ENCODE measurements at regions of chr14 and their contacts with region 1.

Region 1: GRCh38 chr14:64823305-64823861 is 56.3 kb downstream of the SPTB start:
- DNase-seq: peak; percentile 41 to 86
- H3K4me3 ChIP-seq: no peak overlapping the region
- H3K27ac ChIP-seq: no peak overlapping the region
- H3K4me1 ChIP-seq: peaks cover 0 to 13% (median 5%) of the 10 kb centered on the region in 4 experiments; a peak in 4 of 7 replicates
- H3K27me3 ChIP-seq: no peaks in the 10 kb centered on the region; a peak in 1 of 7 replicates
- CTCF ChIP-seq: peak; percentile 78 to 98 (median 82)
- EP300 ChIP-seq: no peak
- POLR2A ChIP-seq: no peak
- RAD21 ChIP-seq: peak; percentile 83 to 85

Region 2: DNA sequence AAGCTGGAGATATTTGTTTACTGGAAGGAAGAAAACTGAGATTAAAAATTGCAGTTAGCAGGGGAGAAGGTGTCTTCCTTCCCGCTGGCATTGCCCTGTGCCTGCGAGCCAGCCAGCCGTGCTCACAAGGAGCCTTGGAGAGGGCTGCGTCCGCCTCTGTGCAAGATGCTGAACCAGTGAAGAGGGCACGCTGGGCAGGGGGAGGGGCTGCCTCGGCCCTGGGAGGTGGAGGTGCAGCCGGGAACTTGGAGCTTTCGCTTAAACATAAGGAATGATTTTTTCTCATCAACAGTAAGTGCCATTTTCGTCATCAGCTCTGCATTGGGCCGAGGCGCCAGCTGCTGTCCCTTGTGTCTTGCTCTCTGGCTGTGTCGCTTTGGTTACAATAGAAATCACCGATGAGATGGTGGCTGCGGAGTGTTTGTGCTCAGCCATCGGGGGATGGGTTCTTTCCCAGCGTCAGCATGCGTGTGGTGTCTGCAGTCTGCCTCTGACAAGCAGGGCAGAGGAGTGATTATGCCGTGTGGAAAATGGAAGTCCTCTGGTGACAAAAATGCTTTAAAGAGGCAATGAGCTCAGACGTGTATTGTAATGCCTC is 626.5 kb before region 1 on chr14:
- CTCF ChIA-PET with region 1: no interaction called
- POLR2A ChIA-PET with region 1: no interaction called
- DNase-seq: peak in 1 of 2 experiments; percentile 78
- H3K4me3 ChIP-seq: peak overlapping the region; percentile 26 to 59 (median 53); a peak in 7 of 8 replicates
- H3K27ac ChIP-seq: no peak overlapping the region; the same call in 1 of the 2 replicates
- H3K4me1 ChIP-seq: peaks cover 15 to 27% (median 20%) of the 10 kb centered on the region in 4 experiments
- H3K27me3 ChIP-seq: no peaks in the 10 kb centered on the region
- CTCF ChIP-seq: no peak
- EP300 ChIP-seq: no peak
- POLR2A ChIP-seq: no peak
- RAD21 ChIP-seq: no peak

Region 3: GRCh38 chr14:64463195-64463594 is 360.2 kb before region 1 on chr14:
- CTCF ChIA-PET with region 1: no interaction called
- POLR2A ChIA-PET with region 1: no interaction called
- DNase-seq: no peak
- H3K4me3 ChIP-seq: no peak overlapping the region
- H3K27ac ChIP-seq: no peak overlapping the region
- H3K4me1 ChIP-seq: peaks cover 0 to 6% (median 4%) of the 10 kb centered on the region in 4 experiments; a peak in 4 of 7 replicates
- H3K27me3 ChIP-seq: no peaks in the 10 kb centered on the region
- CTCF ChIP-seq: no peak
- EP300 ChIP-seq: no peak
- POLR2A ChIP-seq: no peak
- RAD21 ChIP-seq: no peak

Region 4: GRCh38 chr14:64591809-64592208 is 231.6 kb before region 1 on chr14:
- CTCF ChIA-PET with region 1: no interaction called
- POLR2A ChIA-PET with region 1: no interaction called
- DNase-seq: no peak
- H3K4me3 ChIP-seq: no peak overlapping the region
- H3K27ac ChIP-seq: no peak overlapping the region
- H3K4me1 ChIP-seq: no peaks in the 10 kb centered on the region; a peak in 1 of 7 replicates
- H3K27me3 ChIP-seq: no peaks in the 10 kb centered on the region
- CTCF ChIP-seq: no peak
- EP300 ChIP-seq: no peak
- POLR2A ChIP-seq: no peak
- RAD21 ChIP-seq: no peak

Region 5: DNA sequence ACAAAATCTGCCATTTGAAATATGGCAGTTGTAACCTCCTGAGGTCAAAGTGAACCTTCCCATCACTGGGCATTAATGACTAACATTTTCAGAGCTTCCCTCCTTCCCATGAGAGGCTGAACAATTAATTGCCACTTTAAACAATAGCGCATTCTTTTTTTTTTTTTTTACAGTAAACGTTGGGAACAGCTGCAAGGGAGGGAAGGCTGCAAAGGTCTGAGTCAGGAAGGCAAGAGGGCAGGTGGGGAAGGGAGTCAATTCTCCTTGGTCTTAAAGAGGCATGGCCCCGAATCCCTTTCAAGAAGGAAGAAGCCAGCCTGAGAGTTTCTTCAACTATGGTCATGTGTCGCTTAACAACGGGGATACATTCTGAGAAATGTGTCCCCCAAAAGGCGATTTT is 160.2 kb before region 1 on chr14:
- CTCF ChIA-PET with region 1: no interaction called
- POLR2A ChIA-PET with region 1: no interaction called
- DNase-seq: no peak
- H3K4me3 ChIP-seq: no peak overlapping the region
- H3K27ac ChIP-seq: no peak overlapping the region
- H3K4me1 ChIP-seq: no peaks in the 10 kb centered on the region
- H3K27me3 ChIP-seq: no peaks in the 10 kb centered on the region
- CTCF ChIP-seq: no peak
- EP300 ChIP-seq: no peak
- POLR2A ChIP-seq: no peak
- RAD21 ChIP-seq: no peak

Region 6: GRCh38 chr14:64772393-64772950 is 50.9 kb before region 1 on chr14:
- CTCF ChIA-PET with region 1: interaction called, 13 read pairs
- POLR2A ChIA-PET with region 1: interaction called, 3 read pairs
- DNase-seq: no peak
- H3K4me3 ChIP-seq: no peak overlapping the region
- H3K27ac ChIP-seq: no peak overlapping the region
- H3K4me1 ChIP-seq: no peaks in the 10 kb centered on the region; a peak in 1 of 7 replicates
- H3K27me3 ChIP-seq: no peaks in the 10 kb centered on the region
- CTCF ChIP-seq: peak in 2 of 3 experiments; percentile 45 to 66; a peak in 3 of 4 replicates
- EP300 ChIP-seq: no peak
- POLR2A ChIP-seq: no peak
- RAD21 ChIP-seq: peak; percentile 26 to 54; a peak in 3 of 4 replicates

Region 7: GRCh38 chr14:64812217-64812811 is 11.1 kb before region 1 on chr14:
- CTCF ChIA-PET with region 1: interaction called, 54 read pairs
- POLR2A ChIA-PET with region 1: interaction called, 3 read pairs
- DNase-seq: peak in 1 of 2 experiments; percentile 71
- H3K4me3 ChIP-seq: peak overlapping the region in 1 of 4 experiments; percentile 19; a peak in 1 of 8 replicates
- H3K27ac ChIP-seq: no peak overlapping the region
- H3K4me1 ChIP-seq: no peaks in the 10 kb centered on the region; a peak in 1 of 7 replicates
- H3K27me3 ChIP-seq: no peaks in the 10 kb centered on the region; a peak in 1 of 7 replicates
- CTCF ChIP-seq: no peak
- EP300 ChIP-seq: no peak
- POLR2A ChIP-seq: no peak
- RAD21 ChIP-seq: no peak

Region 8: GRCh38 chr14:64855721-64856528 is 32.5 kb after region 1 on chr14:
- CTCF ChIA-PET with region 1: interaction called, 13 read pairs
- POLR2A ChIA-PET with region 1: no interaction called
- DNase-seq: no peak
- H3K4me3 ChIP-seq: no peak overlapping the region
- H3K27ac ChIP-seq: no peak overlapping the region
- H3K4me1 ChIP-seq: peaks cover 12 to 19% (median 14%) of the 10 kb centered on the region in 4 experiments
- H3K27me3 ChIP-seq: no peaks in the 10 kb centered on the region
- CTCF ChIP-seq: no peak
- EP300 ChIP-seq: no peak
- POLR2A ChIP-seq: no peak
- RAD21 ChIP-seq: no peak

Region 9: GRCh38 chr14:64880221-64881121 is 57.1 kb after region 1 on chr14:
- CTCF ChIA-PET with region 1: interaction called, 243 read pairs
- POLR2A ChIA-PET with region 1: no interaction called
- DNase-seq: peak in 1 of 2 experiments; percentile 88
- H3K4me3 ChIP-seq: peak overlapping the region; percentile 56 to 82 (median 66)
- H3K27ac ChIP-seq: no peak overlapping the region
- H3K4me1 ChIP-seq: peaks cover 0 to 3% (median 1%) of the 10 kb centered on the region in 4 experiments; a peak in 5 of 7 replicates
- H3K27me3 ChIP-seq: peaks cover 0 to 34% (median 24%) of the 10 kb centered on the region in 4 experiments; a peak in 6 of 7 replicates
- CTCF ChIP-seq: no peak
- EP300 ChIP-seq: no peak
- POLR2A ChIP-seq: peak in 1 of 2 experiments; percentile 28; a peak in 1 of 3 replicates
- RAD21 ChIP-seq: no peak

Region 10: DNA sequence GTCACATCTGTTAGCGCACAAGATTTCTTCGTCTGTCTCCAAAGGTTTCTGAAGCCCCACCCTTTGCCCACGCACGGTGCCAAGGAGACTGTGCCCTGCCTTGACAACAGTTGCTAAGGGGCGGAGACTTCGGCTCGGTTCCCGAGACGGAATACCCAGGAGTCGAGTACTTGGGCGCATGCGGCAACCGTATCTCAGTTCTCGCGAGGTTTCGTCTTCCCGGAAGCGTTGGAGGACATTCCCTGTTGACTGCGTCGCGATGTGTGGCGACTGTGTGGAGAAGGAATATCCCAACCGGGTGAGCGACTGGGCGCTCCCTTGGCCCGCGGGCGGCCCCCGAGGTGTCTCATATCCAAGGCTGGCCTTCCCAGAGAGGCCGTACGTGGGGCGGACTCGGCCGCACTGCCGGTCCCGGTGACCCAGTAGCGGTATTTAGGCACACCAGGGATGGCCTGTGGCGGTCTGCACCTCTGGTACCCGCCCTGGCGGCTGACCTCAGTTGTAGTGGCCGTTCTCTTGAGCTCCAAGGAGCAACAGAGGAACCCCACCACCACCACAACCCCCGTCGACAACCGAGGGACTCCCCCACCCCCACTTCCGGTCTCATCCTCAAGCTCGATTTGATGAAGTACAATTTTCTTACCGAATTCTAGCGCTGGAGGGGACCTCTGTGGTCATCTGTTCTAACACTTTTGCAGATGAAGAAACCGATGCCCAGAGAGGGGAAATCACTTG is 91.0 kb after region 1 on chr14 and contains the start of gene CHURC1:
- CTCF ChIA-PET with region 1: interaction called, 34 read pairs
- POLR2A ChIA-PET with region 1: interaction called, 3 read pairs
- DNase-seq: peak; percentile 89 to 96
- H3K4me3 ChIP-seq: peak within 1 kb of the TSS; percentile 75 to 90 (median 89)
- H3K27ac ChIP-seq: peak within 1 kb of the TSS; percentile 86
- H3K4me1 ChIP-seq: peaks cover 0 to 4% (median 3%) of the 10 kb centered on the region in 4 experiments; a peak in 4 of 7 replicates
- H3K27me3 ChIP-seq: no peaks in the 10 kb centered on the region
- CTCF ChIP-seq: peak in 1 of 3 experiments; percentile 9; a peak in 1 of 4 replicates
- EP300 ChIP-seq: no peak
- POLR2A ChIP-seq: peak in 1 of 2 experiments; percentile 97; a peak in 2 of 3 replicates
- RAD21 ChIP-seq: 0 out of 4 replicates have a peak, but pooled peaks of 1 of the 2 experiments have one; percentile 4
- total RNA-seq, gene CHURC1: 50.2 and 55.6 TPM in 2 replicates

Measured in H1 (cell line).